ENCODE measurements at regions of chr11 and their contacts with region 1.

Region 1: DNA sequence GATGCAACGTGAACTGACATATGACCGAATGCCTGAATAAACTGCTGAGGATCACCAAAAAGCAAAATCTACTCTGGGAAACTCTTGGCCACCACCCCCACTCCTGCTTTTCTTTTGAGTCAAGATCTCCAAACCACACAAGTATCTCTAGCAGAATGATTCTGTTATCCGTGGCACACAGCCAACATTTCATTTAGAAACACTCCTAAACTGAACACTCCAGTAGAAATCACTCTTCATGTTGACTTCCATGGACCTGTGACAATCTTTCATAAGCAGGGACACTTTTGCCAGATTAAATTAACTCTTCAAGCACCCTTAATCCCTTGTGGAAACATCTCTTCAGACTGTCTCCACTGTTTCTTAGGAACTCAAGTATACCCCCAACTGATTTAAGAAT is 44.4 kb downstream of the VSIG10L2 start:
- DNase-seq: no peak
- ATAC-seq: peak; percentile 73

Region 2: DNA sequence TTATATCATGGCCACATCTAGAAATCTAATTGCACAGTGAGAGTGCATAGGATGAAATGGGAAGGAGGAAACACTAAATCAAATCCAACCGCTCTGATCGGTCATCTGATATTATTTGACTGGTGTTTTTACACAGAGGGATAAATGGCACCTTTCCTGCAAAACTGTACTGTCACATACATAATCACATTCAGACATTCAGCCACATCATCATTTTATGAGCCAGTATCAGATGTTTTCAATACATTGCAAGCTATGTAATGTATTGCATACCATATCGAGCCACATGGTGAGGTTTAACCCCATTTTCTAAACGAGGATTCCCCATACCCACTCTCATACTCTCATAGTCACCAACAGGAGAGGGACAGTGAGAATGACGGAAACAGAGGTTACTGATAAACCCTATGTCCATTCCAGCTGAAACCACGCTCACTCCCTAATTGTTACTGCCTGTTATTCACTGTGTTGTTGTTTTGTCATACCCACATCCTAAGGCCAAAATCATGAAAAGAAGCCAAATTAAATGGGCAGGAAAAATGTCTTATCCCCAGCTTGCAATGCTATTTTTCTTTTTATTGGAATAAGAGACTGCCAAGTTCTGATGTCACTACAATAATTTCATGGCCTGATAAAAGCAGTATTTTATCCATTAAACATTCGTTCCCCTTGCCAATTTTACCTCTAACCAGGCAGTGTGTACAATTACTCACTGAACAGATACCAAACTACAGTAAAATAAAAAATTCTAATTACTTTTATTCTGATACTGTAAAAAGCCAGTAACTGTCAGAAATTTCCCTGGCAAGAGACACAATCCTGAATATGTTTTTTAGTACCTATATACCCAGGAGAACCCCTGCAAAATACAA is 63.4 kb after region 1 on chr11:
- intact Hi-C with region 1: loop called (anchors 2 kb)
- DNase-seq: no peak
- ATAC-seq: no peak

Measured in left ventricle myocardium superior (tissue), 1 donor.